Heart left ventricle (tissue), 16 donors: ENCODE measurements at regions of chr1 and their contacts with region 1.

Region 1: GRCh38 chr1:201468844-201469511 is at the start of gene PHLDA3:
- DNase-seq: peak; percentile 87 to 92 (median 92)
- ATAC-seq: peak; percentile 63 to 89 (median 86)
- H3K4me3 ChIP-seq: peak within 1 kb of the TSS; percentile 71 to 97 (median 90)
- H3K27ac ChIP-seq: peak within 1 kb of the TSS; percentile 86 to 98 (median 94)
- H3K4me1 ChIP-seq: peaks cover 0 to 42% (median 16%) of the 10 kb centered on the region in 12 donors
- H3K27me3 ChIP-seq: peaks cover 0 to 18% (median 0%) of the 10 kb centered on the region in 9 donors
- CTCF ChIP-seq: peak in 4 of 12 donors; percentile 5 to 29 (median 8)
- POLR2A ChIP-seq: peak in 1 of 2 donors; percentile 85
- total RNA-seq, gene PHLDA3: 18.4 to 48.1 (median 33.4) TPM

Region 2: GRCh38 chr1:201245092-201245491 is 223.9 kb before region 1 on chr1:
- intact Hi-C with region 1: no loop called
- DNase-seq: no peak
- ATAC-seq: no peak
- H3K4me3 ChIP-seq: no peak overlapping the region
- H3K27ac ChIP-seq: no peak overlapping the region
- H3K4me1 ChIP-seq: no peaks in the 10 kb centered on the region
- H3K27me3 ChIP-seq: peaks cover 0 to 38% (median 19%) of the 10 kb centered on the region in 9 donors
- CTCF ChIP-seq: no peak
- POLR2A ChIP-seq: no peak

Region 3: DNA sequence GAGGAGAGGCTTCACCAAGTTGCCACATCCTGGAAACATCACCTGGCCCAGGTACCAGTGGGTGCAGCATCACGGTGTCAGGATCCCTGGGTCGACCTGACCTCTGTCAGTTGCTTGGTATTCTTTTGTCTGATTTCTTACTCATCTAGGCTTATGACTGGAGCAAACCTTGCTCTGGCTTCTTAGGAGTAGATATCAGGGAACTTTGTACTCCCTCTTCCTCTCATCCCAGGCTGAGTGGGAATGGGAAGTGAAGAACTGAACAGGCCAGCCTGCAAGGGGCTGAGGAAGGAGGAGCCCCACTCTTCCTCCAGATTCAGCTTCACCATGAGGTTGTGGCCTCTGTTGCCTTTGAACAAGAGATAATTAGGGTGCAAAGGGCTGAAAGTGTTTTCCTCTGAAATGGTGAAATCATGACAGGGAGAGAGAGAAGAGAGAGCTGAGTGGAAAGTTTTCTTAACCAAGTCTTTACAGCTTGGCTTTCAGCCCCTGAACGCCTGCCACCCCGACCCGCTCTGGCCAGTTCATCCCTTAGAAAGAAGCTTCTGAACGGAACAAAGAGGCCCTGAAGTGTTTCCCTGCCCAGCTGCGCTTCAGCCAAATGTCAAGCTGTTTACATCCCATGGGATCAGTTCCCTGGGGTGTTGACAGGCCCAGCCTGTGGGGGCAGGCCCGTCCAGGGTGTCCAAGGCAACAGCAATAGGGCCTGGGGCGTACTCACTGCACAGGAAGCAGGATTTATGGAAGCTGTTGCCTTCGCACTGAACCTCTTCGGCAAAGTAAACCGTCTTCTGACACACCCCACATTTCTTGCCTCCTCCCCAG is 26.7 kb after region 1 on chr1:
- intact Hi-C with region 1: loop called in 1 of 10 experiments (anchors 1 kb)
- DNase-seq: peak; percentile 75 to 87 (median 85)
- ATAC-seq: peak; percentile 80 to 85 (median 84)
- H3K4me3 ChIP-seq: no peak overlapping the region
- H3K27ac ChIP-seq: peak overlapping the region; percentile 34 to 98 (median 77)
- H3K4me1 ChIP-seq: peaks cover 23 to 93% (median 68%) of the 10 kb centered on the region in 12 donors
- H3K27me3 ChIP-seq: no peaks in the 10 kb centered on the region
- CTCF ChIP-seq: no peak
- POLR2A ChIP-seq: no peak

Region 4: DNA sequence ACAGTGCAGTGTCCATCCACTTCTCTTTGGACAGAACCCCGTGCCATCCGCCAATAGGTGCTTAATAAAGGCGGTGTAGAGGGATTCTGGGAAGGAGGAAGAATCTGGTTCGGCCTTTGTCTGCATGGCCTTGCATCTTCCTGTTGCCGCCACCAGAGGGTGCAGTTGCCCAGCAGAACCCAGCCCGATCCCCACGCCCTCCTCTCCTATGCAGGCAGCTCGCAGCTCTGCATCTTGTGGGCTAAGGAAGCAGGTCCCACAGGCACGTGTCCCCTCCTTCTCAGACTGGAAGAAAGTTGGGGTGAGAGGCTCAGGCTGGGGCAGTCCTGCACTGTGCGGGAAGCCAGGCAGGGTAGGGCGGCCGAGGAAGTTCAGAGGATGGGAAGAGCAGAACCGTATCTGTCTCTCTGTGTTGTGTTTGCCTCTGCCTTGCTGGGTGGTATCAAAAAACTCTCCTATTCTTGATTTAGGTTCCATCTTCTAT is 90.7 kb after region 1 on chr1:
- intact Hi-C with region 1: no loop called
- DNase-seq: peak; percentile 81 to 89 (median 85)
- ATAC-seq: peak; percentile 77 to 85 (median 78)
- H3K4me3 ChIP-seq: no peak overlapping the region
- H3K27ac ChIP-seq: peak overlapping the region in 4 of 12 donors; percentile 25 to 51 (median 39)
- H3K4me1 ChIP-seq: peaks cover 14 to 94% (median 73%) of the 10 kb centered on the region in 12 donors
- H3K27me3 ChIP-seq: no peaks in the 10 kb centered on the region
- CTCF ChIP-seq: peak; percentile 90 to 97 (median 94)
- POLR2A ChIP-seq: no peak